Activated CD8-positive, alpha-beta T cell treated with anti-CD3 and anti-CD28 coated beads for 36 hours (primary cell): ENCODE measurements at regions of chr3 and their contacts with region 1.

Region 1: GRCh38 chr3:156509189-156510174 is 45.4 kb downstream of the SSR3 start:
- DNase-seq: no peak
- ATAC-seq: peak; percentile 77
- H3K4me3 Mint-ChIP-seq: no peak overlapping the region
- H3K27ac Mint-ChIP-seq: no peak overlapping the region
- H3K4me1 Mint-ChIP-seq: peaks cover 2% of the 10 kb centered on the region
- H3K27me3 Mint-ChIP-seq: peaks cover 6% of the 10 kb centered on the region
- CTCF ChIP-seq: peak; percentile 45

Region 2: GRCh38 chr3:156044634-156044975 is 464.9 kb before region 1 on chr3:
- CTCF ChIA-PET with region 1: interaction called, 12 read pairs
- POLR2A ChIA-PET with region 1: no interaction called
- intact Hi-C with region 1: no loop called
- DNase-seq: no peak
- ATAC-seq: no peak
- H3K4me3 Mint-ChIP-seq: no peak overlapping the region
- H3K27ac Mint-ChIP-seq: no peak overlapping the region
- H3K4me1 Mint-ChIP-seq: no peaks in the 10 kb centered on the region
- H3K27me3 Mint-ChIP-seq: peaks cover 15% of the 10 kb centered on the region
- CTCF ChIP-seq: no peak

Region 3: GRCh38 chr3:156240642-156241041 is 268.8 kb before region 1 on chr3:
- CTCF ChIA-PET with region 1: no interaction called
- POLR2A ChIA-PET with region 1: no interaction called
- intact Hi-C with region 1: no loop called
- DNase-seq: no peak
- ATAC-seq: no peak
- H3K4me3 Mint-ChIP-seq: no peak overlapping the region
- H3K27ac Mint-ChIP-seq: no peak overlapping the region
- H3K4me1 Mint-ChIP-seq: no peaks in the 10 kb centered on the region
- H3K27me3 Mint-ChIP-seq: peaks cover 9% of the 10 kb centered on the region
- CTCF ChIP-seq: no peak

Region 4: DNA sequence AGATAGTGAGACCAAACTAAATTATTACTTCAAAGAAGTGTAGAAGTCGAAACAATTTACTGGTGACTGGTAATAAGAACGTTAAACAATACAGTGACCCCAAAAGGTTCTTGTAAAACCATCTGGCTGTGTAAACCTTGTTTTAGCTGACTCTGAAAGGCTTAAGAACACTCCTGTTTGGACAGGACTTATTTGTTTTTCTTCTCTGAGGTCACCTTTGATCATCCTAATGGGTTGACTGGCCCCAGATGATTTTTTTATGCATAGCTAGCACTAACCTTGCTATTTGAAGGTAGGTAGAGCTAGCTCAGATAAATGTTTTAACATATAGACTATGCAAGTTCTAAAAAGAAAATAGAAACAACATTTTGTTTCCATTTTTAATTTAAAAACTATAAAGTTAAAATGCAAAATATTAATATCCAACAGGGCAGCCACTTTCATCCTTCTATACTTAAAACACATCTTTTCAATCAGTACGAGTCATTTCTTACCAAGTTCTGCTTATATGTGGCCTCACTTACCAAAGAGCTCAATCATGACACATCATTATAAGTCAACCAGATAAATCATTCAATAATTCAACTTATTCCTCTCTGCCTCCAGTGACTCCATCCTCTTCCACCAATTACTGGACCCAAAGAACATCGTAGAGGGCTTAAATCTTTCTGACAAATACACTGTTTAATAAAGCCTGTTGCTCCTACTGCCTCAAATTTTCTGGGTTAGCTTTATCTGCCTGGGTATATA is 113.3 kb before region 1 on chr3:
- CTCF ChIA-PET with region 1: interaction called, 10 read pairs
- POLR2A ChIA-PET with region 1: no interaction called
- intact Hi-C with region 1: no loop called
- DNase-seq: no peak
- ATAC-seq: no peak
- H3K4me3 Mint-ChIP-seq: no peak overlapping the region
- H3K27ac Mint-ChIP-seq: no peak overlapping the region
- H3K4me1 Mint-ChIP-seq: no peaks in the 10 kb centered on the region
- H3K27me3 Mint-ChIP-seq: peaks cover 6% of the 10 kb centered on the region
- CTCF ChIP-seq: no peak

Region 5: DNA sequence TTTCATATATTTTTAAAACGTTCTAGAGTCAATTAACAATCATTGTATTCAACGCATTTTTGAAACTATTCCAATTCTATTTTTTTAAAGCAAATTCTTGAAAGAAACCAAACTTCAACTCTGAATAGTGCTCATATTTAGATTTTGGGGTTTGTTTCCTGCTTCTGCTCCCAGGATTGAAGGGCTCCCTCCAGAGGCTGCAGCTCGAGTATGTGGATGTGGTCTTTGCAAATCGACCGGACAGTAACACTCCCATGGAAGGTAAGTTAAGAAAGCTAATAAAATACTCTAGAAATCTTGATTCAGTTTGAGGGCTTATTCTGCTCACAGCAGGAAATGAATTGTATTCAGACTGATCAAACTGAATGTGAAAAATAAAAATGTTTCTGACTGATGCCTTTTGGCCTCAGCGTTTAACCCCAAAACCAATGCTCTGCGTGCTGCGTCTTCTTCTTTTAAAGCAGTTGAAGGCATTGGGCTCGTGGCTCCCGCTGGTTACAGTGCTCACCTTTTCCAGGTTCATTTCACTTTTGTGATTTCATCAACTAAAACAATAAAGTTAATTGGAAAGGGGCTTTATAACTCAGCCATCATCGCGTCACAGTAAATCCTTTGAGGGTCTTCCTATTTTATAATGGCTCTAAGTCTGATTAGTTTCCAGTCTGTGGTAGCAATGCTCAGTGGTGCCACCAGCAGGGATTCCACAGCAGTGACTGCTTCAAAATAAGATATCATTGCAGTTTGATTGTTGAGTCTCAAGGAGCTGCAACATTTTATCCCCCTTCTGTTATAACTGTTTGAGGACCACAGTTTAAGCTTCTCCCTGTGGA is 34.7 kb before region 1 on chr3:
- CTCF ChIA-PET with region 1: interaction called, 19 read pairs
- POLR2A ChIA-PET with region 1: no interaction called
- intact Hi-C with region 1: no loop called
- DNase-seq: peak; percentile 26
- ATAC-seq: peak; percentile 64
- H3K4me3 Mint-ChIP-seq: no peak overlapping the region
- H3K27ac Mint-ChIP-seq: no peak overlapping the region
- H3K4me1 Mint-ChIP-seq: no peaks in the 10 kb centered on the region
- H3K27me3 Mint-ChIP-seq: peaks cover 10% of the 10 kb centered on the region
- CTCF ChIP-seq: peak; percentile 49

Region 6: DNA sequence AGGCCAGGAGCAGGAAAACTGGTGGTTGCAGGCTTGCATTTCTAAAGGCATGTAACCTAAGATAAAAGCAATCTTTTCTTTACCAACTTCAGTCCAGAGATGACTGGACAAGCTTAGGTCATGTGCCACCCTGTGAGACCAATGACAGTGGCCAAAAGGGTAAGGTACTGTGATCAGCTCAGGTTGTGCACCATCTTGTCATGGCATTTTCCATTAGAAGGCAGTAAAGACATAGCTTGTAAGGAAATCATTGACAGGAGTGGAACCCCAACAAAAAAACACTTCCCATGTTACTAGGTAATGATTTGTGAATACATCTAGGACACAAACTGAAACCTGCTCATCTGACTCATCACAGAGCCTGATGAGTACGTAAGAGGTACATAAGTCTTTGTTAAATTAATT is 10.3 kb after region 1 on chr3:
- CTCF ChIA-PET with region 1: interaction called, 17 read pairs
- POLR2A ChIA-PET with region 1: no interaction called
- intact Hi-C with region 1: no loop called
- DNase-seq: peak; percentile 25
- ATAC-seq: peak; percentile 70
- H3K4me3 Mint-ChIP-seq: no peak overlapping the region
- H3K27ac Mint-ChIP-seq: no peak overlapping the region
- H3K4me1 Mint-ChIP-seq: peaks cover 19% of the 10 kb centered on the region
- H3K27me3 Mint-ChIP-seq: peaks cover 19% of the 10 kb centered on the region
- CTCF ChIP-seq: no peak

Region 7: GRCh38 chr3:156547637-156548036 is 38.2 kb after region 1 on chr3:
- CTCF ChIA-PET with region 1: interaction called, 11 read pairs
- POLR2A ChIA-PET with region 1: no interaction called
- intact Hi-C with region 1: no loop called
- DNase-seq: no peak
- ATAC-seq: no peak
- H3K4me3 Mint-ChIP-seq: no peak overlapping the region
- H3K27ac Mint-ChIP-seq: no peak overlapping the region
- H3K4me1 Mint-ChIP-seq: peaks cover 49% of the 10 kb centered on the region
- H3K27me3 Mint-ChIP-seq: no peaks in the 10 kb centered on the region
- CTCF ChIP-seq: no peak